ENCODE measurements at regions of chr1 and their contacts with region 1.

Region 1: GRCh38 chr1:59150577-59151391 is 146.1 kb upstream of the FGGY start:
- DNase-seq: peak; percentile 95
- H3K4me3 ChIP-seq: peak overlapping the region in 3 of 4 donors; percentile 12 to 31 (median 25)
- H3K27ac ChIP-seq: peak overlapping the region; percentile 70 to 85 (median 76)
- H3K4me1 ChIP-seq: peaks cover 31 to 42% (median 35%) of the 10 kb centered on the region in 4 donors
- H3K27me3 ChIP-seq: no peaks in the 10 kb centered on the region
- CTCF ChIP-seq: no peak
- EP300 ChIP-seq: peak; percentile 72
- POLR2A ChIP-seq: no peak

Region 2: DNA sequence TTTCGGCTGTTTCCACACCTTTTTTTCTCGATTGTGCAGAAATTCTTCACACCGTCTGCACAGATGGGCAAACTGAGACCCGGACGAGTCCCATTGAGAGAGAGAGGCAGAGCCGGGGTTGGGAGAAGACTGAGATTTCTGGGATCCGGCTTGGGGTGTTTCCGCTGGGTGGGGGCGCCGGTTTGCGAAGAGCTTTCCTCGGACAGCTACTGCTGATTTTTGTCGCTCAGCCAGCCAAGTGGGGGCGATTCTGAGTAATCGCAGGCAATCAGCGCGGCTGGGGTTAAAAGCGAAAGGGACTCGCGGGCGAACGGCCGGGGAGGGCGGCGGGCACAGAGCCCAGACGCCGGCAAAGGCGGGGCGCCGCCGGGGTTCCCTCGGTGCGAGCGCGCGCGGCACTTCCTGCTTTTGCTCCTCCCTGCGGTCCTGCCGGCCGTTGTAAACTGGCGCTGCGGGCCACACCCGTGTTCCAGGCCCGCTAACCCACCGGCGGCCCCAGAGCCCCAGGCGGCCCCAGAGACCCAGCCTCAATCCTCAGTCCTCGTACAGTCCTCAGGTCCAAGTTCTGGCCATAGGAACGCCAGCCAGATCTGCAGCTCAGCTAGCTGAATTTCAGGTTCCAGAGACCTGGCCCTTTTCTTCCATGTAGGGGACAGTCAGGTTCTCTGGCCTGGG is 334.6 kb before region 1 on chr1:
- intact Hi-C with region 1: loop called (anchors 10 kb)
- DNase-seq: peak; percentile 95
- H3K4me3 ChIP-seq: peak overlapping the region; percentile 65 to 73 (median 68)
- H3K27ac ChIP-seq: peak overlapping the region; percentile 91 to 96 (median 94)
- H3K4me1 ChIP-seq: peaks cover 27 to 37% (median 34%) of the 10 kb centered on the region in 4 donors
- H3K27me3 ChIP-seq: no peaks in the 10 kb centered on the region
- CTCF ChIP-seq: peak in 2 of 3 experiments; percentile 8 to 22
- EP300 ChIP-seq: peak; percentile 6
- POLR2A ChIP-seq: peak; percentile 26

Region 3: GRCh38 chr1:59707178-59707791 is 556.5 kb after region 1 on chr1:
- intact Hi-C with region 1: loop called (anchors 10 kb)
- DNase-seq: no peak
- H3K4me3 ChIP-seq: no peak overlapping the region
- H3K27ac ChIP-seq: peak overlapping the region; percentile 53 to 72 (median 60)
- H3K4me1 ChIP-seq: peaks cover 49 to 63% (median 59%) of the 10 kb centered on the region in 4 donors
- H3K27me3 ChIP-seq: no peaks in the 10 kb centered on the region
- CTCF ChIP-seq: no peak
- EP300 ChIP-seq: no peak
- POLR2A ChIP-seq: no peak